HepG2 (cell line): ENCODE measurements at regions of chr4 and their contacts with region 1.

Region 1: GRCh38 chr4:15506464-15506863 is 36.8 kb downstream of the CC2D2A start:
- DNase-seq: no peak
- ATAC-seq: no peak
- H3K4me3 ChIP-seq: no peak overlapping the region
- H3K27ac ChIP-seq: no peak overlapping the region
- H3K4me1 ChIP-seq: peaks cover 6% of the 10 kb centered on the region; the same call in 1 of the 2 replicates
- H3K27me3 ChIP-seq: no peaks in the 10 kb centered on the region
- CTCF ChIP-seq: no peak
- EP300 ChIP-seq: no peak
- POLR2A ChIP-seq: no peak
- RAD21 ChIP-seq: no peak

Region 2: GRCh38 chr4:13750594-13750993 is 1755.9 kb before region 1 on chr4:
- CTCF ChIA-PET with region 1: no interaction called
- POLR2A ChIA-PET with region 1: no interaction called
- in situ Hi-C with region 1: no loop called
- intact Hi-C with region 1: loop called (anchors 10 kb)
- DNase-seq: no peak
- ATAC-seq: no peak
- H3K4me3 ChIP-seq: no peak overlapping the region
- H3K27ac ChIP-seq: no peak overlapping the region
- H3K4me1 ChIP-seq: no peaks in the 10 kb centered on the region
- H3K27me3 ChIP-seq: no peaks in the 10 kb centered on the region
- CTCF ChIP-seq: no peak
- EP300 ChIP-seq: no peak
- POLR2A ChIP-seq: no peak
- RAD21 ChIP-seq: no peak

Region 3: GRCh38 chr4:15375667-15376066 is 130.8 kb before region 1 on chr4:
- CTCF ChIA-PET with region 1: no interaction called
- POLR2A ChIA-PET with region 1: no interaction called
- in situ Hi-C with region 1: no loop called
- intact Hi-C with region 1: no loop called
- DNase-seq: no peak
- ATAC-seq: no peak
- H3K4me3 ChIP-seq: no peak overlapping the region
- H3K27ac ChIP-seq: no peak overlapping the region
- H3K4me1 ChIP-seq: no peaks in the 10 kb centered on the region
- H3K27me3 ChIP-seq: peaks cover 0 to 11% of the 10 kb centered on the region in 2 experiments; a peak in 1 of 5 replicates
- CTCF ChIP-seq: no peak
- EP300 ChIP-seq: no peak
- POLR2A ChIP-seq: no peak
- RAD21 ChIP-seq: no peak